HCT116 (cell line): ENCODE measurements at regions of chr3 and their contacts with region 1.

Region 1: GRCh38 chr3:170414202-170414663 is 4.4 kb upstream of the CLDN11 start:
- DNase-seq: peak; percentile 45
- ATAC-seq: peak; percentile 84
- H3K4me3 ChIP-seq: no peak overlapping the region
- H3K27ac ChIP-seq: no peak overlapping the region
- H3K4me1 ChIP-seq: no peaks in the 10 kb centered on the region
- H3K27me3 ChIP-seq: no peaks in the 10 kb centered on the region
- CTCF ChIP-seq: peak; percentile 92 to 98 (median 95)
- POLR2A ChIP-seq: no peak
- RAD21 ChIP-seq: peak; percentile 96

Region 2: DNA sequence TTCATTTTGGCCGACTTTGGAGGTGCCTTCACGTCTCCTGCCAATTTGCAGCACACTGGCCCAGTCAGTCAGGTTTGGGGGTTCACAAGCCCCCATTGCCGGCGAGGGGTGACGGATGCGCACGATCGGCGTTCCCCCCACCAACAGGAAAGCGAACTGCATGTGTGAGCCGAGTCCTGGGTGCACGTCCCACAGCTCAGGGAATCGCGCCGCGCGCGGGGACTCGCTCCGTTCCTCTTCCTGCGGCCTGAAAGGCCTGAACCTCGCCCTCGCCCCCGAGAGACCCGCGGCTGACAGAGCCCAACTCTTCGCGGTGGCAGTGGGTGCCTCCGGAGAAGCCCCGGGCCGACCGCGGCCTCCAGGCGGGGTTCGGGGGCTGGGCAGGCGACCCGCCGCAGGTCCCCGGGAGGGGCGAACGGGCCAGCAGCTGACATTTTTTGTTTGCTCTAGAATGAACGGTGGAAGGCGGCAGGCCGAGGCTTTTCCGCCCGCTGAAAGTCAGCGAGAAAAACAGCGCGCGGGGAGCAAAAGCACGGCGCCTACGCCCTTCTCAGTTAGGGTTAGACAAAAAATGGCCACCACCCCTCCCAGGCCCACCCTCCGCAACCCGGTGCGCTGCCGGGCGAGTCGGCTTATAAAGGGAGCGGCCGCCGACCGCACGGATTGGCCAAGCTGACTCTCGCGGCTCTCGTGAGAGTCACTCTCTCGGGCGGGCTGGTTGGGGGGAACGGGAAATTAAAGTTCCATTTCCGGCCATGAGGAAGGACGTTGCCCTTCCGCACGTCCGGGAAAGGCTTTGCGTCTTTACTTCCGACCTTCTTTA is 649.6 kb before region 1 on chr3 and contains the start of gene TERC:
- CTCF ChIA-PET with region 1: interaction called, 3 read pairs
- POLR2A ChIA-PET with region 1: no interaction called
- RAD21 ChIA-PET with region 1: no interaction called
- intact Hi-C with region 1: loop called (anchors 5 kb)
- DNase-seq: peak; percentile 95
- ATAC-seq: peak; percentile 87
- H3K4me3 ChIP-seq: peak within 1 kb of the TSS; percentile 66 to 97
- H3K27ac ChIP-seq: peak within 1 kb of the TSS; percentile 98
- H3K4me1 ChIP-seq: peaks cover 7 to 18% of the 10 kb centered on the region in 2 experiments; a peak in 3 of 4 replicates
- H3K27me3 ChIP-seq: no peaks in the 10 kb centered on the region
- CTCF ChIP-seq: no peak
- POLR2A ChIP-seq: peak; percentile 87
- RAD21 ChIP-seq: no peak
- total RNA-seq, gene TERC: 47.0 TPM

Region 3: DNA sequence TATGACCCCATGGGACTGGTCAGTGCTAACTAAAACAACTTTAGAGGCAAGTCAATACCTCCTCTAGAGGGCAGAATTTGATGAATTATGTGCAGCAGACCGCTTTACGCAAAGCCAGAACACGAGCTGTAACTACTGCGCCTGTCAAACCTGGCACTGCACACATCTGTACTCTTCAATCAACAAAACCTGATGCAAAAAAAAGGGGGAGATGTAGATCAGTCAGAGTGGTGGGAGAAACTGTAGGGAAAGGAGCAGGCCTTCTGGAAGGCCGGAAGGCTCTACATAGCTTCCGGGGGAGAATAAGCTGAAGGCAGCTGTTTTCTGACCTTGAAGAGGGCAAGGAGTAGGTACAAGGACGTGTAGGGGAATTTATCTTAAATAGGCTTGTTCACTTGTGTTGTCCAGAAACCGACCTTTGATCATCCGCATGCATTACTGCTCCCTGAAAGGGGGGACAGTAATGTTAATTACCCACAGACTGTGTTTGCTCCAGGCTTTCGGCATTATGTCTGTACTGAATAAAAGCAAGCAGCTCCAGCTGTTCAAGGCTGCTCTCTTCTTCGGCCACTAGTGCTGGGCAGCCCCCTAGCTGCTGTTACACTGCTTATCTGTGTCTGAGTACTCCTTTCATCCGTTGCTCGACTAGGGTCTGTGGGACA is 335.5 kb before region 1 on chr3:
- CTCF ChIA-PET with region 1: interaction called, 11 read pairs
- POLR2A ChIA-PET with region 1: no interaction called
- RAD21 ChIA-PET with region 1: no interaction called
- intact Hi-C with region 1: no loop called
- DNase-seq: peak; percentile 2
- ATAC-seq: peak; percentile 77
- H3K4me3 ChIP-seq: no peak overlapping the region
- H3K27ac ChIP-seq: no peak overlapping the region
- H3K4me1 ChIP-seq: no peaks in the 10 kb centered on the region
- H3K27me3 ChIP-seq: no peaks in the 10 kb centered on the region
- CTCF ChIP-seq: peak in 2 of 3 experiments; percentile 42 to 52; a peak in 3 of 6 replicates
- POLR2A ChIP-seq: no peak
- RAD21 ChIP-seq: peak; percentile 56

Region 4: GRCh38 chr3:170207717-170208116 is 206.5 kb before region 1 on chr3:
- CTCF ChIA-PET with region 1: no interaction called
- POLR2A ChIA-PET with region 1: no interaction called
- RAD21 ChIA-PET with region 1: no interaction called
- intact Hi-C with region 1: no loop called
- DNase-seq: no peak
- ATAC-seq: no peak
- H3K4me3 ChIP-seq: no peak overlapping the region
- H3K27ac ChIP-seq: no peak overlapping the region
- H3K4me1 ChIP-seq: no peaks in the 10 kb centered on the region
- H3K27me3 ChIP-seq: no peaks in the 10 kb centered on the region
- CTCF ChIP-seq: no peak
- POLR2A ChIP-seq: no peak
- RAD21 ChIP-seq: no peak

Region 5: DNA sequence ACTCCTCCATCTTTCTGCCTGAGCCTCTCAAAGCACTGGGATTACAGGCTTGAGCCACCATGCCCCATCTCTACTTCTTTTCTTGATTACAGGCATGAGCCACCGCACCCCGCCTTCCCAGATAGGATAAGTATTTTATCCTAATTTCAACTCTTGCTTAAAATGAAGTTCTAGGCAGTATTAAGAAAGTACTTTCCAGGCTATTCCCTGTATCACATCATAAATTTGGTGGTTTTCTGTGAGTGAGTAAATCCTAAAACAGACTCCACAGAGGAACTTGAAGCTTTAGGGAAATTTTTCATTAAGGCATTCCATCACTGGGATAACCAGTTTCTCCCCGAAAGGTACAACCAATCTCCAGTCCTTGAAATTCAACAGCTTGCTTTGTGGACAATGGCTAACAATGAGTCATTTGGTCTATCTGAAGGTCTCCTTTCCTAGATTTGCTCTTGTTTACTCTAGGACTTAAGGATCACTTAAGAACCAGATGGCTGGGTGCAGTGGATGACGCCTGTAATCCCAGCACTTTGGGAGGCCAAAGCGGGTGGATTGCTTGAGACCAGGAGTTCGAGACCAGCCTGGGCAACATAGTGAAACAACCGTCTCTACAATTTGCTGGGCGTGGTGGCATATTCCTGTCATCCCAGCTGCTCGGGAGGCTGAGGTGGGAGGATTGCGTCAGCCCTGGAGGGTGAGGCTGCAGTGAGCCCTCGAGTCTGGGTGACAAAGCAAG is 106.4 kb before region 1 on chr3:
- CTCF ChIA-PET with region 1: interaction called, 21 read pairs
- POLR2A ChIA-PET with region 1: no interaction called
- RAD21 ChIA-PET with region 1: no interaction called
- intact Hi-C with region 1: loop called (anchors 1 kb)
- DNase-seq: no peak
- ATAC-seq: no peak
- H3K4me3 ChIP-seq: no peak overlapping the region
- H3K27ac ChIP-seq: no peak overlapping the region
- H3K4me1 ChIP-seq: no peaks in the 10 kb centered on the region
- H3K27me3 ChIP-seq: no peaks in the 10 kb centered on the region
- CTCF ChIP-seq: no peak
- POLR2A ChIP-seq: no peak
- RAD21 ChIP-seq: no peak

Region 6: GRCh38 chr3:170585937-170586310 is 171.7 kb after region 1 on chr3 and contains the start of gene SLC7A14:
- CTCF ChIA-PET with region 1: no interaction called
- POLR2A ChIA-PET with region 1: no interaction called
- RAD21 ChIA-PET with region 1: no interaction called
- intact Hi-C with region 1: no loop called
- DNase-seq: no peak
- ATAC-seq: no peak
- H3K4me3 ChIP-seq: no peak within 1 kb of the TSS
- H3K27ac ChIP-seq: no peak within 1 kb of the TSS
- H3K4me1 ChIP-seq: no peaks in the 10 kb centered on the region
- H3K27me3 ChIP-seq: peaks cover 32% of the 10 kb centered on the region
- CTCF ChIP-seq: no peak
- POLR2A ChIP-seq: no peak
- RAD21 ChIP-seq: no peak
- total RNA-seq, gene SLC7A14: not detected

Region 7: DNA sequence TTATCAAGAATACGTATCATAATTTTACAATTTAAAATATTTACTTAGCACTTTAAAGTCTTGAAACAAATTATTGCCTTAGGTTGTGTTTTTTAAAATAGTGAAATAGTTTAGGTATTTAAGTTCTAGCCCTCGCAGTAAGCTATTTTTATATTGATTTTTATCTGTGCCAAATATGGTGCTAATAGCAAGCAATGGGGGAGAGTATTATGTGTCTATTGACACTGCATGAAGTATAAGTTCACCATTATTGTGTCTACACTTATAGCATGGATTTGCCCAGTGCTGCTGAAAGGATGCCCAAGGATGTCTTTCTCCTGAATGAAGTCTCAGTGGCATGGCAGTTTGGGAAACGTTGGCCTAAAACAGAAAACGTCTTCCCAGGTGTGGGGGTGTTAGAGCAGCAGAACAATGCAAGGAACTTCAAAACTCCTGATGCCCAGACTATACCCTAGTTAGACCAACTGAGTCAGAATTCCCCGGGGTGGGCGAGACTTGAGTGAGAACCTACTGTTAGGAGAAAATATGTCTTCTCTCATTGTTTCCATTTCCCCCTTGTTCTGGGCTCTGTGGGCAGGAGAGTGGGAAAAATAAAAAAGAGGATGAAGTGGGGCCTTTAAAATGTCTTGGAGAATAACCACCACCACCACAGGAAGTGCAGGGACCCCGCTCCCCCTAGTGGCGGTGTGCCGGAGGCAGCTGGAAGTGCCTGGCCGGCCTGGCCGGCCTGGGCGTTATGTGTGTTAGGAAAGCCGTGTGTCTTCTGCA is 275.8 kb after region 1 on chr3:
- CTCF ChIA-PET with region 1: interaction called, 14 read pairs
- POLR2A ChIA-PET with region 1: no interaction called
- RAD21 ChIA-PET with region 1: interaction called in 1 of 2 experiments, 10 read pairs
- intact Hi-C with region 1: loop called (anchors 1 kb)
- DNase-seq: peak; percentile 34
- ATAC-seq: peak; percentile 94
- H3K4me3 ChIP-seq: no peak overlapping the region
- H3K27ac ChIP-seq: no peak overlapping the region; the same call in 1 of the 2 replicates
- H3K4me1 ChIP-seq: peaks cover 11 to 18% of the 10 kb centered on the region in 2 experiments
- H3K27me3 ChIP-seq: no peaks in the 10 kb centered on the region
- CTCF ChIP-seq: peak; percentile 58 to 94 (median 78); a peak in 5 of 6 replicates
- POLR2A ChIP-seq: no peak
- RAD21 ChIP-seq: peak; percentile 75

Region 8: GRCh38 chr3:170848292-170848917 is 434.2 kb after region 1 on chr3:
- CTCF ChIA-PET with region 1: interaction called, 38 read pairs
- POLR2A ChIA-PET with region 1: no interaction called
- RAD21 ChIA-PET with region 1: interaction called, 6 to 7 read pairs
- intact Hi-C with region 1: loop called (anchors 1 kb)
- DNase-seq: no peak
- ATAC-seq: peak; percentile 61
- H3K4me3 ChIP-seq: no peak overlapping the region
- H3K27ac ChIP-seq: no peak overlapping the region
- H3K4me1 ChIP-seq: no peaks in the 10 kb centered on the region
- H3K27me3 ChIP-seq: no peaks in the 10 kb centered on the region
- CTCF ChIP-seq: peak; percentile 17 to 65 (median 46); a peak in 3 of 6 replicates
- POLR2A ChIP-seq: no peak
- RAD21 ChIP-seq: peak; percentile 64